WTC11 (cell line): ENCODE measurements at regions of chr2 and their contacts with region 1.

Region 1: DNA sequence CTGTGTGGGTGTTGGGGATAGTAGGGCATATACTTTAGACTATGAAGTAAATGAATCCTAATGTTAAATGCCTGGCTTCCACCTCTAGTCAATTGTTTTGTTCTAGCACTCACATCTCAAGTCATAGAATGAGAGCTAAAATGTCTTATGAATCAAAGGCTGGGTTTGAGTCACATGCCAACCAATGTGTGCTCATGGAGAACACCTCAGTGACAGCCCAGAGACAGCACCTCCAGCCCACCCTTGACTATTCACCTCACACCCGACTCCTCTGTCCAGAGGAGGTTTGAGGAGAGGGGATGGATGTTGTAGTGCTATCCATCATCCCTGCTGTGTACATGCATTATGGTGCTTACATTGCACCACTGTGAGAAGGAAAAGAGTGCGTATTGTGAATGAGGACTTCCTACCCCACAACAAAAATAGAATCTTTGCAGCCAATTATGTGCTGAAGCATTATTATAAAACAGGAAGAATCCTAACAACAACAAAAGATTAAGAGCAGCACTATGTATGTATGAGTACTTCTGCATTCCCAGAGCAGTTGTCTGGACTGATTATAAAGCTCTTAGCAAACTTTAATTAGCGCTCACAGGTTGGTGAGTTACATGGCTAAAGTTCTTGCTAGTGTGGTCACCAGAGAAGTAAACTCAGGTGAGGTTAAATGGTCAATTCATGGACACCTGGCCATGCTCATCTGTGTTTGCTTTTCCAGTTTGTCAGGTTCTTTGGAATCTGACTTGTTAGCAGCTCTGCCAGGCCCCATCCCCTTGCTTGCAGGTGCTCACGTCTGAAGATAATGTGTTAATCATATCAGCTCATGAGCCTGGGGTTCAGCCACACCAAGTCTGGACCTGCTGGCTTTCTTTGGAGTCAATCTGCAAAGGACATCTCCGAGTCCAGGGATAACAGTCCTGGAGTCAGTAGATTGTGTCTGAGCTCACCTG is 55.3 kb upstream of the NABP1 start:
- DNase-seq: no peak
- ATAC-seq: no peak
- H3K4me3 Mint-ChIP-seq: no peak overlapping the region
- H3K27ac Mint-ChIP-seq: no peak overlapping the region
- H3K4me1 Mint-ChIP-seq: no peaks in the 10 kb centered on the region
- H3K27me3 Mint-ChIP-seq: no peaks in the 10 kb centered on the region
- CTCF ChIP-seq: no peak

Region 2: GRCh38 chr2:190664240-190664639 is 958.4 kb before region 1 on chr2:
- CTCF ChIA-PET with region 1: no interaction called
- POLR2A ChIA-PET with region 1: interaction called, 14 read pairs
- DNase-seq: no peak
- ATAC-seq: no peak
- H3K4me3 Mint-ChIP-seq: no peak overlapping the region
- H3K27ac Mint-ChIP-seq: no peak overlapping the region
- H3K4me1 Mint-ChIP-seq: peaks cover 4% of the 10 kb centered on the region
- H3K27me3 Mint-ChIP-seq: no peaks in the 10 kb centered on the region
- CTCF ChIP-seq: no peak

Region 3: GRCh38 chr2:191933307-191934105 is 310.9 kb after region 1 on chr2:
- CTCF ChIA-PET with region 1: no interaction called
- POLR2A ChIA-PET with region 1: no interaction called
- DNase-seq: no peak
- ATAC-seq: no peak
- H3K4me3 Mint-ChIP-seq: no peak overlapping the region
- H3K27ac Mint-ChIP-seq: no peak overlapping the region
- H3K4me1 Mint-ChIP-seq: peaks cover 15% of the 10 kb centered on the region
- H3K27me3 Mint-ChIP-seq: no peaks in the 10 kb centered on the region
- CTCF ChIP-seq: no peak